ENCODE measurements at regions of chr2 and their contacts with region 1.

Region 1: DNA sequence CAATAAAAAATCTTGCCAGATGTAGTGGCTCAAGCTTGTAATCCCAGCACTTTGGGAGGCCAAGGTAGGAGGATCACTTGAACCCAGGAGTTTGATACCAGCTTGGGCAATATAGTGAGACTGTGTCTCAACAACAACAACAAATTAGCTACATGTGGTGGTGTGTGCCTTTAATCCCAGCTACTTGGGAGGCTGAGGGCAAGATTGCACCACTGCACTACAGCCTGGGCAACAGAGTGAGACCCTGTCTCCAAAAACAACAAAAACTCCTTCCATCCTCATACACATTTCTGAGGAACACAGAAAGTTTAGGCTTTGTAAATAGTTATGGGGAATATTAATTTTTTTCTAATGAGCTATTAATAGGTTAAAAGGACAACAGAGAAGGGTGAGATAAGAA is 17.0 kb downstream of the PDE6D start:
- DNase-seq: no peak
- H3K4me3 ChIP-seq: no peak overlapping the region
- H3K27me3 ChIP-seq: no peaks in the 10 kb centered on the region
- CTCF ChIP-seq: no peak

Region 2: GRCh38 chr2:231360401-231361371 is 403.4 kb before region 1 on chr2:
- CTCF ChIA-PET with region 1: no interaction called
- POLR2A ChIA-PET with region 1: no interaction called
- DNase-seq: no peak
- H3K4me3 ChIP-seq: no peak overlapping the region
- H3K27me3 ChIP-seq: no peaks in the 10 kb centered on the region
- CTCF ChIP-seq: no peak

Region 3: GRCh38 chr2:231732604-231733003 is 31.5 kb before region 1 on chr2:
- CTCF ChIA-PET with region 1: interaction called, 3 read pairs
- POLR2A ChIA-PET with region 1: interaction called, 11 read pairs
- DNase-seq: no peak
- H3K4me3 ChIP-seq: no peak overlapping the region
- H3K27me3 ChIP-seq: no peaks in the 10 kb centered on the region
- CTCF ChIP-seq: no peak

Region 4: DNA sequence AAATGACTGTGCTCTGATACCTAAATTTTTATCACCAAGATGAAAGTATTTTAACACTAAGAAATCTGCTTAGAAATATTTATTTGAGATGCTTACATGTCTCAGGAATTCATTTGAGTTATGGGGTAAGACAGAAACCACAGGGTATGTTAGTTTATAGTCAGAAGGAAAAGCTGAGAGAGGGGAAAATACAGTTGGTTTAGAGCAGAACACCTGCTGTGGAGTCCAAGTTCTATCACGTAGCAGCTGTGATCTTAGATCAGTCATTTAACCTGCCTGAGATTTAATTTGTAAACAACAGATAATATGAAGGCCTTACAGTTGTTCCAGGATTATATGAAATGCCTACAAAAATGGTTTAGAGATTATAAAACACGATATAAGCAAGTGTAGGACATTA is 12.1 kb before region 1 on chr2:
- CTCF ChIA-PET with region 1: no interaction called
- POLR2A ChIA-PET with region 1: no interaction called
- DNase-seq: no peak
- H3K4me3 ChIP-seq: no peak overlapping the region
- H3K27me3 ChIP-seq: no peaks in the 10 kb centered on the region
- CTCF ChIP-seq: no peak

Region 5: DNA sequence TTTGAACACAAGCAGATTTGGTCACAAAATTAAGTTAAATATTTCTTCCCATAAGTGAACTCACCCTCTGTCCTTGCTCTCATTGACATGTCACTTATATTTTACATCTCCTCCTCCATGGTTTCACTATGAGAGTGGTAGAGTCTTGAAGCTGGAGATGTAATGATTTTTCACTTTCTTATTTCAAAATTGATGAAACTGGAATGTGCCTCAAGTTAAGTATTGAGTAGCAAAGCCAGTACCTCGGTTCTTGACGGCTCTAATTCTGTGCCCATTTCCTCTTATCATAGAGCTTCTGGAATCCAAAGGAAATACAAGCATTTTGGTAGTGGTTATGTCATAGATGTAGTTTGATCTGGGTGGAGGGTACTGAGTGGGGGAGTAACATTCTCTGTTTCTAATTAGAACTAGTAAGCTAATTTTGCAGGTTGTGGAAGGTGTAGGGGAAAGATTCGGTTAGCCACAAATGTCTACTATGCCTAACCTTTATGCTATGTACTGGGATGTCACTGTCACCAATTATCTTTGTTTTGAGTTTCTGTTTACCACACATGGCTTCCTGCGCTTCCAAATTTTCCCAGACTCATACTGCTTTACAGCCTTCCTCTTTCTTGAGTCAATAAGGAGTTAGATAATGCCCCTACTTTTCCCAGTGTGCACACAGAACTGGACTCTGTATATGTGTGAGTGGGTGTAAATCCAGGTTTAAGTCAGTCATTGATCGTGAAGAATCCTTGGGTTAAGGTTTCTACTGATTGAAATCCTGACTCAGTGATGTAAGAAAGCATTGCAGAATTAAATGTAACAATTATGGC is 294.1 kb after region 1 on chr2:
- CTCF ChIA-PET with region 1: no interaction called
- POLR2A ChIA-PET with region 1: no interaction called
- DNase-seq: no peak
- H3K4me3 ChIP-seq: no peak overlapping the region
- H3K27me3 ChIP-seq: no peaks in the 10 kb centered on the region
- CTCF ChIP-seq: no peak

Region 6: GRCh38 chr2:232903989-232904388 is 1139.9 kb after region 1 on chr2:
- CTCF ChIA-PET with region 1: no interaction called
- POLR2A ChIA-PET with region 1: no interaction called
- DNase-seq: no peak
- H3K4me3 ChIP-seq: no peak overlapping the region
- H3K27me3 ChIP-seq: no peaks in the 10 kb centered on the region
- CTCF ChIP-seq: no peak